Aorta (tissue), 5 donors: ENCODE measurements at regions of chr12 and their contacts with region 1.

Region 1: DNA sequence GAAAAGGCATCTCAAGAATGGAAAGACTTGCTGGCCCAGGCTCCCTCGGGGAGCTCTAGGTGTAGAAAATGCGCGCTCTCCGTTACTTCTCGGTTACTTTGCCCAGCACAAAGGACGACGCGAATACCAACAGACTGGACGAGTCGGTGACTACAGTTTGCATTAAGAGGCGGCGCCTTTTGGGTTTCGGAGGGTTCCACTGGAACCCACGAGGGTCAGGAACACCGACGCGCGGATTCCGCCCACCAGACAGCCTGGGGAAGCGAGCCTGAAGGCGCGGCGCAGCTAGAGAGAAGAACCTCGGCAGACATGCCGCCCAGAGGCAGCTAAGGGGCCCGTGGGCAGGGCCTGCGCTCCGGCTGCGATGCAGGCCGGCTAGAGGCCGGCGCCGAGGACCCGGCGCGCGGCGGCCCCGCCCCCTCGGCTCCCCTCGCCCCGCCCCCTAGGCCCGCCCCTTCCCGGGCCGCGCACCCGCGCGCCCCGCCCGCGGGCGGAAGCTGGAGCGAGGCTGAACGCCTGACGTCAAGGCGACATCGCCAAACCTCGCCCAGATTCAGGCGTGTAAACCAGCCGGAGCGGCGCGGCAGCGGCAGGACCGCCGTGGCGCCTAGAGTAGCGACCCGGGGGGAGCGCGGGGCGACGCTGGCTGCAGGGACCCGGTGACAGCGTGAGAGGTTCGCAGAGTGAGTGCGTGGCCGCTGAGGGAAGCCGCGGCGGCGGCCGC is at the start of gene RAP1B:
- DNase-seq: peak; percentile 94 to 96
- ATAC-seq: peak; percentile 98
- H3K4me3 ChIP-seq: peak within 1 kb of the TSS; percentile 91 to 99
- H3K27ac ChIP-seq: peak within 1 kb of the TSS; percentile 98 to 100
- H3K4me1 ChIP-seq: no peaks in the 10 kb centered on the region
- H3K27me3 ChIP-seq: no peaks in the 10 kb centered on the region
- total RNA-seq, gene RAP1B: 166 to 173 TPM

Region 2: DNA sequence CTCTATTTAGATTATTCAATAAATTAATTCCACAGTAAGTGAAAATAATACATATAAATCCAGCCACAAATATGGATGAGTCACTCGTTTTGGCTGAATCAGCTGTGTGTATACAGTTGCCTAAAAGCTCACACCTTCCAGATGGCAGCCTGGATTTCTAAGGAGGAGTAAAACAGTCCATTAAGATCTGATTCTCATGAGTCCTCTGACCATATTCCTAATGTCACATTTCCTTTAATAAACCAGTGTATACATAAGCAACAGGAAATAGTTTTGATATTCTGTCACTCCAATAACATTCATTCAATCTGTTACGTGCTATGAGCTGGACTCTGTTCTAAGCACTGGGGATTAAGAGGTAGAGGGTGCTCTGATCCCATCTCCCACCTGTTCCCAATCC is 300.2 kb before region 1 on chr12:
- intact Hi-C with region 1: no loop called
- DNase-seq: no peak
- ATAC-seq: no peak
- H3K4me3 ChIP-seq: no peak overlapping the region
- H3K27ac ChIP-seq: no peak overlapping the region
- H3K4me1 ChIP-seq: peaks cover 1 to 2% of the 10 kb centered on the region in 2 donors
- H3K27me3 ChIP-seq: no peaks in the 10 kb centered on the region

Region 3: GRCh38 chr12:68364893-68365725 is 245.4 kb before region 1 on chr12:
- intact Hi-C with region 1: loop called (anchors 2 to 10 kb)
- DNase-seq: peak; percentile 94 to 96
- ATAC-seq: peak; percentile 95
- H3K4me3 ChIP-seq: peak overlapping the region in 1 of 2 donors; percentile 9
- H3K27ac ChIP-seq: peak overlapping the region; percentile 14 to 86
- H3K4me1 ChIP-seq: no peaks in the 10 kb centered on the region
- H3K27me3 ChIP-seq: no peaks in the 10 kb centered on the region

Region 4: DNA sequence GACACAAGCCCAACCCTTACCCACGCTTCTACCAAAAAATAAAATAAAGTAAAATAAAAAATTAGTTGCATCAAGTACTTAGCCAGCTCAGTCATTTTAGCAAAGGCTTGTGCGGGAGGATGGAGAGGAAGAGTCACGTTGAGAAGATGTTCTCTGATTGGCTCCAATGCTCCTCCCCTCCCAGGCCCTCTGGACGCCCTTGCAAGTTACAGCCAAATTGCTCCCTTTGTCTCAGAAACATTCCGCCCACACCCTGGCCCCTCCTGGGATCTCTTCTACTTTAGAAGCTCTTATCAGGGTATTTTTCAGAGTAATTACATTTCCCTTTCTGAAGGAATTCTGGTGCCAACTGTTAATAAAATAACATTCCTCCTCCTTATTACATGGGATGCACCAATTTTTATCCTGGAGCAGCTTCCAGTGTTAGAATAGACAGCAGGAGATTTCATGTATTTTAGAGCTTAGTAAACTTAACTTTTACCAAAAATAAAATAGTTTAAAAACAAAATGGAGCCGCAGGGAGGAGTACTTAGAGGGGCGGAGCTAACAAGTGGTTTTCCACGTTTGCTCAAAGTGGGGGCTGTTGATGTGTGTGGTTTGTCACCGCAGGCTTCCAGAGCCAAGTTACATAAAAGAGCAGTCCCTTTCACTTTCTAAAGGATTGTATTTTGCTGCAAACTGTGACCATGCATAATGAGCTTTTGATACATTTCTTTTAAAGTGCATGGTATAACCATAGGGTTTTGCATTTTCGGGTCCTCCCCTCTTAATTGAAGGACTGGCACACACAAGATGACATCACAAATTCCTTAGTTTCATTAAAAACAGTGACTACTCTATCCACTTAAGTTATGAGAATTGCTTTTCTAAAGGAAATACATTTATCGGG is 71.6 kb before region 1 on chr12:
- intact Hi-C with region 1: loop called in 1 of 2 experiments (anchors 10 kb)
- DNase-seq: peak; percentile 82
- ATAC-seq: peak; percentile 90
- H3K4me3 ChIP-seq: peak overlapping the region in 1 of 2 donors; percentile 12
- H3K27ac ChIP-seq: peak overlapping the region; percentile 14 to 30
- H3K4me1 ChIP-seq: no peaks in the 10 kb centered on the region
- H3K27me3 ChIP-seq: no peaks in the 10 kb centered on the region

Region 5: GRCh38 chr12:68595241-68595640 is 15.3 kb before region 1 on chr12:
- intact Hi-C with region 1: loop called in 1 of 2 experiments (anchors 2 kb)
- DNase-seq: no peak
- ATAC-seq: no peak
- H3K4me3 ChIP-seq: no peak overlapping the region
- H3K27ac ChIP-seq: no peak overlapping the region
- H3K4me1 ChIP-seq: no peaks in the 10 kb centered on the region
- H3K27me3 ChIP-seq: no peaks in the 10 kb centered on the region

Region 6: GRCh38 chr12:68641138-68641537 is 30.6 kb after region 1 on chr12:
- intact Hi-C with region 1: no loop called
- DNase-seq: no peak
- ATAC-seq: no peak
- H3K4me3 ChIP-seq: no peak overlapping the region
- H3K27ac ChIP-seq: no peak overlapping the region
- H3K4me1 ChIP-seq: no peaks in the 10 kb centered on the region
- H3K27me3 ChIP-seq: no peaks in the 10 kb centered on the region

Region 7: GRCh38 chr12:68686595-68687521 is 76.3 kb after region 1 on chr12 and contains the start of gene NUP107:
- intact Hi-C with region 1: loop called in 1 of 2 experiments (anchors 2 kb)
- DNase-seq: peak; percentile 99 to 100
- ATAC-seq: peak; percentile 98
- H3K4me3 ChIP-seq: peak within 1 kb of the TSS; percentile 41 to 60
- H3K27ac ChIP-seq: peak within 1 kb of the TSS; percentile 1 to 52
- H3K4me1 ChIP-seq: no peaks in the 10 kb centered on the region
- H3K27me3 ChIP-seq: no peaks in the 10 kb centered on the region
- total RNA-seq, gene NUP107: 36.0 to 53.4 TPM